SK-N-SH (cell line): ENCODE measurements at regions of chr20 and their contacts with region 1.

Region 1: GRCh38 chr20:50179507-50180016 is 11.1 kb upstream of the CEBPB start:
- DNase-seq: no peak
- H3K4me3 ChIP-seq: no peak overlapping the region
- H3K27ac ChIP-seq: no peak overlapping the region
- H3K4me1 ChIP-seq: peaks cover 0 to 2% of the 10 kb centered on the region in 2 experiments; a peak in 1 of 4 replicates
- H3K27me3 ChIP-seq: no peaks in the 10 kb centered on the region
- CTCF ChIP-seq: no peak
- EP300 ChIP-seq: no peak
- RAD21 ChIP-seq: no peak

Region 2: GRCh38 chr20:49877386-49877921 is 302.1 kb before region 1 on chr20:
- CTCF ChIA-PET with region 1: no interaction called
- POLR2A ChIA-PET with region 1: no interaction called
- DNase-seq: no peak
- H3K4me3 ChIP-seq: no peak overlapping the region
- H3K27ac ChIP-seq: no peak overlapping the region
- H3K4me1 ChIP-seq: no peaks in the 10 kb centered on the region; a peak in 1 of 4 replicates
- H3K27me3 ChIP-seq: no peaks in the 10 kb centered on the region
- CTCF ChIP-seq: no peak
- EP300 ChIP-seq: no peak
- RAD21 ChIP-seq: no peak

Region 3: GRCh38 chr20:50144362-50144761 is 35.2 kb before region 1 on chr20:
- CTCF ChIA-PET with region 1: interaction called, 10 read pairs
- POLR2A ChIA-PET with region 1: interaction called, 5 read pairs
- DNase-seq: no peak
- H3K4me3 ChIP-seq: no peak overlapping the region
- H3K27ac ChIP-seq: peak overlapping the region in 1 of 2 experiments; percentile 40; a peak in 2 of 4 replicates
- H3K4me1 ChIP-seq: peaks cover 11 to 16% of the 10 kb centered on the region in 2 experiments; a peak in 2 of 4 replicates
- H3K27me3 ChIP-seq: no peaks in the 10 kb centered on the region
- CTCF ChIP-seq: no peak
- EP300 ChIP-seq: no peak
- RAD21 ChIP-seq: no peak

Region 4: GRCh38 chr20:50153485-50154377 is 25.8 kb before region 1 on chr20 and contains the start of gene PEDS1:
- CTCF ChIA-PET with region 1: interaction called, 13 read pairs
- POLR2A ChIA-PET with region 1: interaction called, 3 read pairs
- DNase-seq: peak; percentile 99
- H3K4me3 ChIP-seq: peak within 1 kb of the TSS; percentile 78 to 97
- H3K27ac ChIP-seq: peak within 1 kb of the TSS; percentile 41 to 82; a peak in 3 of 4 replicates
- H3K4me1 ChIP-seq: peaks cover 3 to 32% of the 10 kb centered on the region in 2 experiments; a peak in 1 of 4 replicates
- H3K27me3 ChIP-seq: no peaks in the 10 kb centered on the region
- CTCF ChIP-seq: no peak
- EP300 ChIP-seq: peak in 1 of 2 experiments; percentile 23; a peak in 1 of 4 replicates
- RAD21 ChIP-seq: no peak; the same call in 1 of the 2 replicates
- polyA plus RNA-seq, gene PEDS1: 18.3 and 18.4 TPM in 2 replicates

Region 5: DNA sequence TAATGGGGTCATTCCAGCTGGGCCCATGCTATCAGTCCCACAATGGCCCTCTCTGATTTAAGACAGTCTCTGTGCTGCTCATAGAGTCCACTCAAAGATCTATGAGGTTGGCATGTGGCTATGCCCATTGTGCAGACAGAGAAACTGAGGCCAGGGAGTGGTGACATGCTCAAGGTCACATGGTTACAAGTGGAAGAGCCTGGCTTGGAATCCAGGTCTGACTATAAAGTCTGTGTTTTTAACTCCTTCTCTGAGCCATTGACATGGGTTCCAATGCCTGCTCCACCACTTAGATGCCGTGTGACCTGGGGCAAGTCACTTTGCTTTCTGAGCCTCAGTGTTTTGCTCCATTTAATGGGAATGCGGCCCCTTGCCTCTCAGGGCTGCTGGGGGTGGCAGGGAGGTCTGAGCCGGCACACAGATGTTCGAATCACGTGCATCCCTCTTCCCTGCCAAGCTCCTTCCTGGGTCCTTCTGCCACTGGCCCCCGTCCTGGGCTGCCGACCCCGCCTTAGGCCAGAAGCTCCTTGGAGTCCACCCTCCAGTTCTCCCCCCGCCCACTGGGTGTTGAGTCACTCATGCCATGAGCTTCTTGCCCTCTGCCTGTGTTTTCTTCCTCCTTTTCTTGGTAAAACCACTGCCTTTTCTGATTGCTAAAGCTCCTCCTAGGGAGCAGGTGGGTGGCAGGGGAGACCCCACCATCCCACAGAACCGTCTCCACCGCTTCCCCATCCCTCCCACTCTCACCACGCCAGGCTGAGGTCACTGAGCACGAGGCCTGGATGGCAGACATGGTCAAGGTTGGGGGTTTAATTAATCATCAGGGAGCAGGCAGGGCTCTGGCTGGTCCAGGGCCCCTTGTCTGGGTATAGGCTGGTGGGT is 46.8 kb after region 1 on chr20:
- CTCF ChIA-PET with region 1: no interaction called
- POLR2A ChIA-PET with region 1: no interaction called
- DNase-seq: no peak
- H3K4me3 ChIP-seq: no peak overlapping the region
- H3K27ac ChIP-seq: no peak overlapping the region
- H3K4me1 ChIP-seq: no peaks in the 10 kb centered on the region; a peak in 1 of 4 replicates
- H3K27me3 ChIP-seq: no peaks in the 10 kb centered on the region
- CTCF ChIP-seq: no peak
- EP300 ChIP-seq: no peak
- RAD21 ChIP-seq: no peak